ENCODE measurements at regions of chr9 and their contacts with region 1.

Region 1: GRCh38 chr9:37575921-37576721 is at the start of gene FBXO10:
- DNase-seq: peak; percentile 53
- ATAC-seq: peak; percentile 76
- H3K4me3 Mint-ChIP-seq: peak within 1 kb of the TSS; percentile 70
- H3K27ac Mint-ChIP-seq: no peak within 1 kb of the TSS
- H3K4me1 Mint-ChIP-seq: peaks cover 19% of the 10 kb centered on the region
- H3K27me3 Mint-ChIP-seq: no peaks in the 10 kb centered on the region
- CTCF ChIP-seq: no peak
- total RNA-seq, gene FBXO10: 2.5 to 3.6 TPM

Region 2: DNA sequence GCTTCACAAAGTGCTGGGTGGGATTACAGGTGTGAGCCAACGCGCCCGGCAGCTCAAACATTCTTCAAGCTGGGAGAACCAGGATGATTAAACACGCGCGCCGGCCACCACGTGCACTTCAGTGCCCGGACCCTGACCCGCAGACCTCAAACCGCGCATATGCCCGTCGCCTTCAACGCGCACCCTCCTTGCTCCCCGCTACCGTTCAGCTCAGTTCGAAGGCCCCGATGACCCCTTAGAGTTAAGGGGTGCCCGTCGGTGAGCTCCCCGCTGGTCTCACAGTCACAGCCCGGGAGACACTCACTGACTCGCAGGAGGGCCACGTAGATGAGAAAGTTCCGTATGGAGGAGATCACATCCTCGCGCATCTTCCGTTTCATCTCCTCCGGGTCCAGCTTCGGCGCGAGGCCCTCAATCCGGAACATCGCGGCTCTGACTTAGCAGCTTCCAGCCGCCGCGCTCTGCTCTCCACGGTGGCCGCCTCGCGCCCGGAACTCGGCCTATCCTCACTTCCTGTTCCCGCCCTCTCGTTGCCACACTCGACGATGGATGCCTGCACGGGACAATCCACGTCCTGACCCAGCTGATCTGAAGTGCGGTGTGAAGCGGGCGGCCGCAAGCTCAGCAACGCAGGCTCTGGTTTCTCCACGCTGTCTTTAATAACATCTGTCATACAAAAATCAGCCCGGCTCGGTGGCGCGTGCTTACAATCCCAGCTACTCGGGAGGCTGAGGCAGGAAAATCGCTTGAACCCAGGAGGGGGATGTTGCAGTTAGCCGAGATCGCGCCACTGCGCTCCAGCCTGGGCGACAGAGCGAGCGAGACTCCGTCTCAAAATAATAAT is 16.2 kb after region 1 on chr9 and contains the start of gene TOMM5:
- CTCF ChIA-PET with region 1: interaction called, 13 read pairs
- POLR2A ChIA-PET with region 1: interaction called, 79 read pairs
- intact Hi-C with region 1: no loop called
- DNase-seq: peak; percentile 94
- ATAC-seq: peak; percentile 94
- H3K4me3 Mint-ChIP-seq: peak within 1 kb of the TSS; percentile 100
- H3K27ac Mint-ChIP-seq: peak within 1 kb of the TSS; percentile 99
- H3K4me1 Mint-ChIP-seq: peaks cover 34% of the 10 kb centered on the region
- H3K27me3 Mint-ChIP-seq: peaks cover 6% of the 10 kb centered on the region
- CTCF ChIP-seq: no peak
- total RNA-seq, gene TOMM5: 156 to 168 TPM